Right ventricle myocardium inferior (tissue), 1 donor: ENCODE measurements at regions of chr12 and their contacts with region 1.

Region 1: GRCh38 chr12:124767066-124767821 is 96.4 kb downstream of the SCARB1 start:
- DNase-seq: peak; percentile 93
- ATAC-seq: peak; percentile 67

Region 2: DNA sequence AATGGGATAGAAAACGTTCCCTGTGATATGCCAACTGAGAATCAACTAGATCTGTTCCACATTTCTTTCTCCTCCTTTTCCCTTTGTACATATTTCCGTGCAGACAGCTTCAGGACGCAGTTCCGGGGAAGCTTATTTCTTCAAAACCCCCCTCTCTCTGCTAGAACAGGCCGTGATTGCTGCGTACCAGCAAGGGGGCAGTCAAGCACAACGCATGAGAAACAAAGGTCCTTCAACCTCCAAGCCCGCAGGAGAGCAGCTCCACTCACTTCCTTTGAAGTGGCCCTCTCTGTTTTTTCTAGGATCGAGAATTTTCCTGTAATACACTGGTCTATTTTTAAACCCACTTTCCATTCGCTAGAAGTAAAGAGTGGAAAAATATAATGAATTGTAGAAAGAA is 713.4 kb before region 1 on chr12:
- intact Hi-C with region 1: loop called (anchors 5 kb)
- DNase-seq: no peak
- ATAC-seq: peak; percentile 84

Region 3: DNA sequence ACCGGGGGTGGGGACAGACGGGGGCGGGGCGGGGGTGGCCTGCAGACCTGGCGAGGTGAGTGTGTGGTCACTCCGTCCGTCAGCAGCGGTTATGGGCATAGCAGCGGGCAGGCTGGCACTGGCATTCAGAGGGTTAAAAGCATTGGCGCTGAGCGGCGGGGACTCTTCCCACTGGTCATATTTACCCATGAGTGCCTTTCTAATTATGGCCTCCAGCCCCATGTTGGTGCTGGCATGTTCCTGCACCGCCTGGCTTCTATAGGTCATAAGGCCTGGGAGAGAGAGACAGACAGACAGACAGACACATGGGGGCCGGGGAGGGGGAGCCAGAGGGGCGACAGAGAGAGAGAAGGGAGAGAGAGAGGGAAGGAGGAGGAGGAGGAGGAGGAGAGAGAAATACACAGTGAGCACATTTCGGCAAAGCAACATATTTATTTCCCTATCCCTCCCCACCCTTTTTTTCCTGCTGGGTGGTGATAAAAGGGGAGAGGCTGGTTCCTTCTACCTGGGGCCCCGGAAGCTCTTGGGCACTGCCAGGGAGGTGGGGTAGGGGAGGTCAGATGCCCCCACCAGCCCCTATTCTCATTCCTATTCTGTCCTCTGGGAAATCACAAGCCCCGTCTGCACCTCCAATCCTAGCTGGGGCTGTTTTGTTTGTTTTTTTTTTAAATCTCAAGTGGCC is 439.7 kb before region 1 on chr12:
- intact Hi-C with region 1: loop called (anchors 2 kb)
- DNase-seq: no peak
- ATAC-seq: peak; percentile 64

Region 4: DNA sequence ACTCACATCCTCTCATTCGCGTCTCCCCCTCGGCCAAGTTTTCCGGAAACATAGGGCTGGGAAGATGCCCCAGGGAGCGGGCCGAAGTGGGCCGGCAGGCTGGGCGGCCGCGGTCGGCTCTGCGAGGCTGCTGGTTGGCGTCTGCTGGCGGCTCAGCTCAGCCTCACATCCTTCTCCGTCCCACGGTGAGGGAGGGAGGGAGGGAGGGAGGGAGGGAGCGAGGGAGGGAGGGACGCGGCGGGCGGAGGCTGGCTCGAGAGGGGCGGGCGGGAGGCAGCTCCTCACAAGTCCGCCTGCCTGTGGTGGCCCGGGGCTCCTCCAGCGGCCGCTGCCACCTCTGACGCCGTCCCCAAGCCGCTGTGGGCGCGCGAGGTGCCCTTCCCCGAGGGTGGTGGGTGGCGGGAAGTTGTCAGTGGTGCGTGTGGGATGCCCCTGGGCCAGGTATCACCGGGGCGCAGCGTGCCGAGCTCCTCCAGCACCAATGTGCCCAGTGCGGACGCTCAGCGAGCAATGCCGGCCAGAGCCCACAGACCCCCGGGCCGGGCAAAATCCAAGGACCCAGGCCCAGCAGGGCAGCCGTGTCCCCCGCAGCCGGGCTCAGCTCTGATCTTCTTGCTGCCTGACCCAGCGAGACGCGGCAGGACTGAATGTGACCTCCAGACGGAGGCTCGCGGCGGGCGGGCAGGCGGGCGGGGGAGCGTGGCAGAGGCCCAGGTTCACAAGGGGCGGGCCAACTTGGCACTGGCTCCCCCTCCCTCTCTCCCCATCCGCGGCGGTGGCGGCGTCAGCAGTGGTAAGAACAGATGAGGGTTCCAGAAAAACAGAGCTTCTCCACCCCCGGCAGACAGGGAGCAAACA is 378.3 kb before region 1 on chr12:
- intact Hi-C with region 1: loop called (anchors 10 kb)
- DNase-seq: peak; percentile 93
- ATAC-seq: peak; percentile 59

Region 5: GRCh38 chr12:124567661-124568373 is 199.4 kb before region 1 on chr12:
- intact Hi-C with region 1: loop called (anchors 1 kb)
- DNase-seq: peak; percentile 99
- ATAC-seq: peak; percentile 89

Region 6: GRCh38 chr12:124837958-124838803 is 70.9 kb after region 1 on chr12:
- intact Hi-C with region 1: no loop called
- DNase-seq: peak; percentile 79
- ATAC-seq: peak; percentile 89